Cardiac septum (tissue), 1 donor: ENCODE measurements at regions of chr1 and their contacts with region 1.

Region 1: GRCh38 chr1:100866041-100866900 is 28.4 kb downstream of the EXTL2 start:
- DNase-seq: no peak

Region 2: DNA sequence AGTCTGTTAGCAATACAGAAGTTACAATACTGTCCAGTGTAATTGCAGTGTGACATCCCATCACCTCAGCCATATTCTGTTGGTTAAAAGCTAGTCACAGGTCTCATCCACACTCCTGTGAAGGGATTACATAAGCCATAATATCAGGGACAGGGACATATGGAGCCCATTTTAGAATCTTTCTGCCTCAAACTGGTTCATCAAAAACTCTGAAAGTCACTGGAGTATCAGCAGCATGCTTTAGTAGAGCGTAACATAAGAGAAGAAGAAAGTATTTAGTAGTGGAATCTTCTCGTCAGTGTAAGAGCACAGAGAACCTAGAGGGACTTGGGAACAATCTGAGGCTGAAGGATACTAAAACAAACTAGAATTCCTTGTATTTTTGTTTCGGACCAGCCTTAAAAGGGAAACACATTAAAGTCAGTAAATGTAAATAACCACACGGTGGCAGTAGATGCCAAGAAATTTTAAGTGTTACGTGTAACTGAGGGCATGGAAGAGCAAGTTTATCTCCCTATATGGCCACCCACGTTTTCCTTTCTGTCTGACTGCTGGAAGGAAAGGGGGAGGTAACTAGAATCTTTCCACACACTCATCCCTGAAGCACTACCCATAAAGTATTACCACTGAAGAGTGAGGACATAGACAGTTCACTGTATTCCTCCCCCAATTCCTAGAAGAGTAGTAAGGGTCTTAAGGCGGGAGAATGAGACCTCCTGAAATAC is 1057.7 kb before region 1 on chr1:
- intact Hi-C with region 1: loop called (anchors 2 kb)
- DNase-seq: no peak

Region 3: GRCh38 chr1:100459358-100460114 is 406.7 kb before region 1 on chr1:
- intact Hi-C with region 1: loop called (anchors 2 kb)
- DNase-seq: no peak

Region 4: DNA sequence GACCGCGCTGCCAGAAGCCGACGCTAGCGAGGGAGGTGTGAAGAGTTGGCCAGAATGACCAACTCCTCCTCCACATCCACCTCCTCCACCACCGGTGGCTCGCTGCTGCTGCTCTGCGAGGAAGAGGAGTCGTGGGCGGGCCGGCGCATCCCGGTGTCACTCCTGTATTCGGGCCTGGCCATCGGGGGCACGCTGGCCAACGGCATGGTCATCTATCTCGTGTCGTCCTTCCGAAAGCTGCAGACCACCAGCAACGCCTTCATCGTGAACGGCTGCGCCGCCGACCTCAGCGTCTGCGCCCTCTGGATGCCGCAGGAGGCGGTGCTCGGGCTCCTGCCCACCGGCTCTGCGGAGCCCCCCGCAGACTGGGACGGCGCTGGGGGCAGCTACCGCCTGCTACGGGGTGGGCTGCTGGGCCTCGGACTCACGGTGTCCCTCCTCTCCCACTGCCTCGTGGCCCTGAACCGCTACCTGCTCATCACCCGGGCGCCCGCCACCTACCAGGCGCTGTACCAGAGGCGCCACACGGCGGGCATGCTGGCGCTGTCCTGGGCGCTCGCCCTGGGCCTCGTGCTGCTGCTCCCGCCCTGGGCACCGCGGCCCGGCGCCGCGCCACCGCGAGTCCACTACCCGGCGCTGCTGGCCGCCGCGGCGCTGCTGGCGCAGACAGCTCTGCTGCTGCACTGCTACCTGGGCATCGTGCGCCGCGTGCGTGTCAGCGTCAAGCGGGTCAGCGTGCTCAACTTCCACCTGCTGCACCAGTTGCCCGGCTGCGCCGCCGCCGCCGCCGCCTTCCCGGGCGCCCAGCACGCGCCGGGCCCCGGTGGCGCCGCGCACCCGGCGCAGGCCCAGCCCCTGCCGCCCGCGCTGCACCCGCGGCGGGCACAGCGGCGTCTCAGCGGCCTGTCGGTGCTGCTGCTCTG is 327.1 kb before region 1 on chr1:
- intact Hi-C with region 1: loop called (anchors 5 kb)
- DNase-seq: no peak

Region 5: GRCh38 chr1:100606438-100606837 is 259.8 kb before region 1 on chr1:
- intact Hi-C with region 1: loop called (anchors 2 kb)
- DNase-seq: no peak

Region 6: DNA sequence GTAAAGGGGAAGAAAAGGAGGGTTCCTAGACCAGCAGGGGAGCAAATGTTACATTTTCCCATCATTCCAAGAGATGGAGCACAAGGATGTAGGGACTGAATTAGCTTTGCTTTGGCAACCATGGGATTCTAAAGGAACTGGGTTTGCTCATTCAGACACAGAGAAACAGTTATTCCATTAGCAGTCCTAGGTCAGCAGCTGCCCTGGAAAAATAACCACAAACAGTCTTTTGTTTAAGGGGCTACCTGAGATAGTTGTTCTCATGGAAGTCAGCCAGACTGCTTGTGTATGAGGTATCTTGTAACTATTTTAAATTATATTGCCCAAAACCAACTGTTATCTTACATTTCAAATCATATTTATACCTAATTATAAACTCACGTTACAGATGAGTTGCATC is 205.1 kb before region 1 on chr1:
- intact Hi-C with region 1: no loop called
- DNase-seq: no peak

Region 7: DNA sequence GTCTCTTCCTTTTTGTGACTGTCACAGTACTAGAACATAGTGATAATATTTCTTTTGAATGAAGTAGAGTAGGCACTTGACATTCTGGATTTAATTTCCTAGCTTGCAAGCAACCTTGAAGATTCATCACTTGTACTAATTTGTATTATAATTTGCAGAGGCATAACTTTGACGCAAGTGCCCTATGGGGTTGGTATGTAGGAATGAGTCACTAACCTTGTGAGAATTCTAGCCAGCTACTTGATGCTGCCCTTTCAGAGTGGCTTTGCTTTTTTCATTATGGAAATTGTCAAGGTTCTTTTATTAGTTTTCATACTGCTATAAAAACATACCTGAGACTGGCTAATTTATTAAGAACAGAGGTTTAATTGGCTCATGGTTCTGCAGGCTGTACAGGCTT is 173.0 kb after region 1 on chr1:
- intact Hi-C with region 1: no loop called
- DNase-seq: no peak